PC-3 (cell line): ENCODE measurements at regions of chr3 and their contacts with region 1.

Region 1: GRCh38 chr3:71859123-71859519 is 74.2 kb upstream of the PROK2 start:
- DNase-seq: peak; percentile 68
- ATAC-seq: peak; percentile 79
- H3K4me3 ChIP-seq: no peak overlapping the region
- H3K27ac ChIP-seq: no peak overlapping the region
- H3K4me1 ChIP-seq: no peaks in the 10 kb centered on the region
- H3K27me3 ChIP-seq: peaks cover 23% of the 10 kb centered on the region
- CTCF ChIP-seq: peak; percentile 71

Region 2: GRCh38 chr3:71710906-71711494 is 148.1 kb before region 1 on chr3:
- CTCF ChIA-PET with region 1: no interaction called
- POLR2A ChIA-PET with region 1: no interaction called
- intact Hi-C with region 1: loop called (anchors 1 kb)
- DNase-seq: peak; percentile 77
- ATAC-seq: peak; percentile 96
- H3K4me3 ChIP-seq: no peak overlapping the region
- H3K27ac ChIP-seq: no peak overlapping the region
- H3K4me1 ChIP-seq: no peaks in the 10 kb centered on the region
- H3K27me3 ChIP-seq: no peaks in the 10 kb centered on the region
- CTCF ChIP-seq: peak; percentile 86

Region 3: GRCh38 chr3:71725279-71725991 is 133.7 kb before region 1 on chr3 and contains the start of gene EIF4E3:
- CTCF ChIA-PET with region 1: no interaction called
- POLR2A ChIA-PET with region 1: no interaction called
- intact Hi-C with region 1: loop called (anchors 5 kb)
- DNase-seq: peak; percentile 35
- ATAC-seq: peak; percentile 61
- H3K4me3 ChIP-seq: peak within 1 kb of the TSS; percentile 82
- H3K27ac ChIP-seq: no peak within 1 kb of the TSS
- H3K4me1 ChIP-seq: peaks cover 9% of the 10 kb centered on the region
- H3K27me3 ChIP-seq: no peaks in the 10 kb centered on the region; the same call in 1 of the 2 replicates
- CTCF ChIP-seq: no peak
- total RNA-seq, gene EIF4E3: 2.2 and 2.5 TPM in 2 replicates

Region 4: GRCh38 chr3:71893122-71893521 is 34.0 kb after region 1 on chr3:
- CTCF ChIA-PET with region 1: no interaction called
- POLR2A ChIA-PET with region 1: no interaction called
- intact Hi-C with region 1: no loop called
- DNase-seq: no peak
- ATAC-seq: no peak
- H3K4me3 ChIP-seq: no peak overlapping the region
- H3K27ac ChIP-seq: no peak overlapping the region
- H3K4me1 ChIP-seq: no peaks in the 10 kb centered on the region
- H3K27me3 ChIP-seq: peaks cover 58% of the 10 kb centered on the region
- CTCF ChIP-seq: no peak

Region 5: DNA sequence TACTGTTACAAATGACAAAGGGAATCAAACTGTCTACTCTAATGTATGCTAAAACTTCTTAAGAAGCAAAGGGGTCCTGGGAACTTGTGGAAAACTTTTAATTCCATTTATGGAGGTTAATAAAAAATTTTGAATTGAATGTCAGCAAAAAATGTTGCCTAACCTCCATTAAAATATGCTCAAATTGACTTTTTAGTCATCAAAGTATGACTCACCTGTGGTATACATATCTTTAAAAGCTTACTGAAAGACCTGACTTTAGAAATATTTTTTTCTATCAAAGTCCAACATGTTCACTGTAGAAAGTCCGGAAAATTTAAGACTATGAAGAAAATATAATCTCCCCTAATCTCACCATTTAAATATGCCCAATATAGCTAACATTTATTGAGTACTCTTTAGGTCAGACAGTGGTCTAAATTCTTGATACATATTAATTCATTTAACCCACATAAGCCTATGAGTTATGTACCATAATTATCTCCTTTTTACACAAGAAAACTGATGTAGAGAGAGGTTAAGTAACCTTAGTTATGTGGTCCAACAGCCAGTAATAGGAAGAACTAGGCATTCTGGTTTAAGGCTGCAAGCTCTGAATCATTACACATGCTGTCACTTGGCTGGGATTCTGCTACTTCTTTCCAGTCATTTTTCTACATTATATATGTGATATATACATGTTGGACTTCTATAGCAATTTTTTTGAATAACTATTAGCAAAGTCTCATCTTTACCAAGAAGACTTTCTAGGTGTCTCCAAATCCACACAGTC is 1682.0 kb after region 1 on chr3:
- CTCF ChIA-PET with region 1: no interaction called
- POLR2A ChIA-PET with region 1: no interaction called
- intact Hi-C with region 1: no loop called
- DNase-seq: peak; percentile 5
- ATAC-seq: no peak
- H3K4me3 ChIP-seq: no peak overlapping the region
- H3K27ac ChIP-seq: no peak overlapping the region
- H3K4me1 ChIP-seq: no peaks in the 10 kb centered on the region
- H3K27me3 ChIP-seq: no peaks in the 10 kb centered on the region
- CTCF ChIP-seq: no peak